PC-3 (cell line): ENCODE measurements at regions of chr1 and their contacts with region 1.

Region 1: DNA sequence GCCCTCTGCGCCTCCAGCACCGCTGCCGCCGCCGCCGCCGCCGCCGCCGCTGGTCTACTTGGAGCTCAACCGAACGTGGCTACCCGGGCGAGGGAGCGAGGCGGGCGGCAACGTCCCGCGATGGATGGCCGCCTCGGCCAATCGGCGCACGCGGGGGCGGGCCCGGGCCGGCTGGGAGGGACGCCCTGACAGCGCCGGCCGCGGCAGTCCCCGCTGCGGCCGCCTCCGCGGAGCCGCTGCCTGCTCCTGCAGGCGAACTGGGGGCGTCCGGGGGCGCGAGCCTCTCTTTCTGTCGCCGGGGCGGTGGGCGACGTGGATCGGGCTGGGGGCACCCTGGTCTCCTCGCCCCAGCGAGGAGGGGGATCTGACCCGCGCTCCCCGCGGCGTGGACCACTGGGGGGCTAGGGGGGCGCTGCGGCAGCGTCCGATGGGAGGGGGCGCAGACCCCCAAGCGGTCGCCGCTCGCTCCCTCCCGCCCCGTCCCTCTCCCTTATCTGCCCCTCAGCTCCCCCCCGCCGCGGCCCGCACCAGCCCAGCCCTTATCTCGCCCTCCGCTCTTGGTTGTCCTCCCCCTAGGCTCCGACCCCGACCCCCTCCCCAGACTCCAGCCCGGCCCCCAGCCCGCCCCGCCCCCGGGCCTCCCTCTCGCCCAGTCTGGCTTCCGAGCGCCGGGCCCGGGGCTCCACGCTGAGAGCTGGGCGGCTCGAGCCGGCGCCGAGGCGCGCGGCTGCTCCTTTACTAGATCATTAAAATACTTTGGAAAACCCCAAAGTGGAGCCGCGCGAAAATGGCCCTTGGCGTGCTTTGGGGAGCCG is at the start of gene SSBP3:
- DNase-seq: peak; percentile 95
- ATAC-seq: peak; percentile 76
- H3K4me3 ChIP-seq: peak within 1 kb of the TSS; percentile 86
- H3K27ac ChIP-seq: peak within 1 kb of the TSS; percentile 89
- H3K4me1 ChIP-seq: peaks cover 38% of the 10 kb centered on the region
- H3K27me3 ChIP-seq: no peaks in the 10 kb centered on the region
- CTCF ChIP-seq: no peak
- total RNA-seq, gene SSBP3: 13.0 and 15.0 TPM in 2 replicates

Region 2: GRCh38 chr1:53869454-53870117 is 537.0 kb before region 1 on chr1:
- CTCF ChIA-PET with region 1: interaction called, 13 read pairs
- POLR2A ChIA-PET with region 1: no interaction called
- intact Hi-C with region 1: no loop called
- DNase-seq: no peak
- ATAC-seq: no peak
- H3K4me3 ChIP-seq: no peak overlapping the region
- H3K27ac ChIP-seq: no peak overlapping the region
- H3K4me1 ChIP-seq: no peaks in the 10 kb centered on the region
- H3K27me3 ChIP-seq: no peaks in the 10 kb centered on the region
- CTCF ChIP-seq: no peak

Region 3: DNA sequence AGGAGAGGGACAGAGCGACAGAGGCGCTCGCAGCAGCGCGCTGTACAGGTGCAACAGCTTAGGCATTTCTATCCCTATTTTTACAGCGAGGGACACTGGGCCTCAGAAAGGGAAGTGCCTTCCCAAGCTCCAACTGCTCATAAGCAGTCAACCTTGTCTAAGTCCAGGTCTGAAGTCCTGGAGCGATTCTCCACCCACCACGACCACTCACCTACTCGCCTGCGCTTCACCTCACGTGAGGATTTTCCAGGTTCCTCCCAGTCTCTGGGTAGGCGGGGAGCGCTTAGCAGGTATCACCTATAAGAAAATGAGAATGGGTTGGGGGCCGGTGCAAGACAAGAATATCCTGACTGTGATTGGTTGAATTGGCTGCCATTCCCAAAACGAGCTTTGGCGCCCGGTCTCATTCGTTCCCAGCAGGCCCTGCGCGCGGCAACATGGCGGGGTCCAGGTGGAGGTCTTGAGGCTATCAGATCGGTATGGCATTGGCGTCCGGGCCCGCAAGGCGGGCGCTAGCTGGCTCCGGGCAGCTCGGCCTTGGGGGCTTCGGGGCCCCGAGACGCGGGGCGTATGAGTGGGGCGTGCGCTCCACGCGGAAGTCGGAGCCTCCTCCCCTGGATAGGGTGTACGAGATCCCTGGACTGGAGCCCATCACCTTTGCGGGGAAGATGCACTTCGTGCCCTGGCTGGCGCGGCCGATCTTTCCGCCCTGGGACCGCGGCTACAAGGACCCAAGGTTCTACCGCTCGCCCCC is 206.6 kb before region 1 on chr1 and contains the starts of genes CYB5RL and MRPL37:
- CTCF ChIA-PET with region 1: no interaction called
- POLR2A ChIA-PET with region 1: interaction called, 42 read pairs
- intact Hi-C with region 1: loop called (anchors 10 kb)
- DNase-seq: peak; percentile 97
- ATAC-seq: peak; percentile 97
- H3K4me3 ChIP-seq: peak within 1 kb of the TSS; percentile 97
- H3K27ac ChIP-seq: peak within 1 kb of the TSS; percentile 3; the same call in 1 of the 2 replicates
- H3K4me1 ChIP-seq: peaks cover 24% of the 10 kb centered on the region
- H3K27me3 ChIP-seq: no peaks in the 10 kb centered on the region
- CTCF ChIP-seq: no peak
- total RNA-seq, gene CYB5RL: 3.6 and 11.9 TPM in 2 replicates
- total RNA-seq, gene MRPL37: 191 and 211 TPM in 2 replicates

Region 4: GRCh38 chr1:54310439-54311328 is 95.9 kb before region 1 on chr1:
- CTCF ChIA-PET with region 1: interaction called, 11 read pairs
- POLR2A ChIA-PET with region 1: no interaction called
- intact Hi-C with region 1: no loop called
- DNase-seq: peak; percentile 30
- ATAC-seq: peak; percentile 20; the same call in 1 of the 2 replicates
- H3K4me3 ChIP-seq: no peak overlapping the region
- H3K27ac ChIP-seq: no peak overlapping the region
- H3K4me1 ChIP-seq: no peaks in the 10 kb centered on the region
- H3K27me3 ChIP-seq: no peaks in the 10 kb centered on the region
- CTCF ChIP-seq: peak; percentile 59

Region 5: DNA sequence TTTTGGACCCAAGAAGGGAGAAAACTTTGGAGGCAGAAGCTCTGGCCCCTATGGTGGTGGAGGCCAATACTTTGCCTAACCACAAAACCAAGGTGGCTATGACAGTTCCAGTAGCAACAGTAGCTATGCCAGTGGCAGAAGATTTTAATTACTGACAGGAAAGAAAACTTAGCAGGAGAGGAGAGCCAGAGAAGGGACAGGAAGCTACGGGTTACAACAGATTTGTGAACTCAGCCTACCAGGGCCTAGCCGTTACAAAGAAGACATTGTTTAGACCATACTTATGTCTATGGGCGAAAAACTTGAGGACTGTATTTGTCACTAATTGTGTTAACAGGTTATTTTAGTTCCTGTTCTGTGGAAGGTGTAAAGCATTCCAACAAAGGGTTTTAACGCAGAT is 131.1 kb after region 1 on chr1:
- CTCF ChIA-PET with region 1: no interaction called
- POLR2A ChIA-PET with region 1: no interaction called
- intact Hi-C with region 1: no loop called
- DNase-seq: no peak
- ATAC-seq: no peak
- H3K4me3 ChIP-seq: no peak overlapping the region
- H3K27ac ChIP-seq: no peak overlapping the region
- H3K4me1 ChIP-seq: no peaks in the 10 kb centered on the region
- H3K27me3 ChIP-seq: peaks cover 4% of the 10 kb centered on the region; the same call in 1 of the 2 replicates
- CTCF ChIP-seq: no peak

Region 6: GRCh38 chr1:54791880-54792522 is 385.5 kb after region 1 on chr1:
- CTCF ChIA-PET with region 1: no interaction called
- POLR2A ChIA-PET with region 1: no interaction called
- intact Hi-C with region 1: loop called (anchors 10 kb)
- DNase-seq: peak; percentile 83
- ATAC-seq: no peak
- H3K4me3 ChIP-seq: no peak overlapping the region
- H3K27ac ChIP-seq: no peak overlapping the region
- H3K4me1 ChIP-seq: peaks cover 35% of the 10 kb centered on the region
- H3K27me3 ChIP-seq: no peaks in the 10 kb centered on the region
- CTCF ChIP-seq: peak; percentile 93